ENCODE measurements at regions of chr18 and their contacts with region 1.

Region 1: DNA sequence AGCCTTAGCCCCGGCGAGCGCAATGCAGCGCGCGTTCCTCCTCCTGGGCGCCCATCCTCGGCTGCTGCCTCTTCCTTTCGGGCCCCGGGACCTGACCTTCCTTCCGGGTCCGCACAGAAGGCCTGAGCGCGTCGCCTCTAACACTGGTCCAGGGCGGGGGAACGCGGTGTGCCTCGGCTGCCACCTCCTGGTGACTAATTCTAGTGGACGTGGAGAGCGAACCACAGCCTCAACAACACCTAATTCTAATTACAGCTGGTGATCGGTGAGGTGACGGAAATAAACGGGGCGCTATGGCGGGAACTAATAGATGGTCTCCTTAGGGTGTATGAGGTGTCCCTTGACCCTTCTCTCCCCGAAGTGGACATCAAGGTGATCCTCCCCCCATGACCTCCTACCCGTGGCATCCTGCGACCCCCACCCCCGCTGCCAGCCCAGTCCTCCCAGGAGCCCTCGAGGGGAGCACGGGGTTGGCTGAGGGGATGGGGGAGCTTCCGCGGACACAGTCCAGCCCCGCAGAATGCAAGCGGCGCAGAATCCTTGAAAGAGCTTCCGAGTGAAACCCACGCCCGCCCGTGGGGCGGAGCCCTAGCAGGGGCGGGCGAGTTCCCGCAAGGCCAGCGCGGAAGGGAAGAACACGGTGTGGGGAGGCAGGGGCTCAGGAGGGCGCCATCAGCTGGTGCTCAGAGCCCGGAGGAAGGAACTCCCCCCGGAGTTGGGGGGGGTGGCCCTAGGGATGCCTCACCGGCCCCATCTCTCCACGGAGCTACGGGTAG is 12.8 kb upstream of the HMSD start:
- H3K4me3 ChIP-seq: peak overlapping the region; percentile 35
- H3K27ac ChIP-seq: no peak overlapping the region
- H3K4me1 ChIP-seq: no peaks in the 10 kb centered on the region
- CTCF ChIP-seq: peak; percentile 68; the same call in 1 of the 2 replicates

Region 2: GRCh38 chr18:63518178-63519012 is 417.9 kb before region 1 on chr18:
- CTCF ChIA-PET with region 1: interaction called, 14 read pairs
- POLR2A ChIA-PET with region 1: no interaction called
- H3K4me3 ChIP-seq: no peak overlapping the region
- H3K27ac ChIP-seq: no peak overlapping the region
- H3K4me1 ChIP-seq: peaks cover 3% of the 10 kb centered on the region; the same call in 1 of the 2 replicates
- CTCF ChIP-seq: peak; percentile 81

Region 3: DNA sequence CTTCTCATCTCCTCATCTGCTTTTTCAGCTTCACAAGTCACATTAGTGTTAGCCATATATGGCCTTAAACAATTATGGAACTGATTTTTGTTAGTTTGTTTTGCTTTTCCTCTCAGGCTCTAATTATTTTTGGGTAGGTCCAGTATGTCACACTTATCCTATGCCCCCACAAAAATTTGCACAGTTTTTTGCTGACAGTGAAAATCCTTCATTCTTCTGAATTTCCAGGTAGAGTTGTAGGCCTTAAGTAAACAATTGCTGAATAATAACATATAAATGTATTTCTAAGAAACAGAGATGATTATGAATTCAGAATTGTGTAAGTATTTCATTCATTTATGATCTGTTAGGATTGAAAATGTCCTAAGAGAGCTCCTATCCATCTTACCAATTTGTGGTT is 37.1 kb before region 1 on chr18:
- CTCF ChIA-PET with region 1: interaction called, 11 read pairs
- POLR2A ChIA-PET with region 1: no interaction called
- H3K4me3 ChIP-seq: no peak overlapping the region
- H3K27ac ChIP-seq: no peak overlapping the region
- H3K4me1 ChIP-seq: no peaks in the 10 kb centered on the region
- CTCF ChIP-seq: no peak

Region 4: DNA sequence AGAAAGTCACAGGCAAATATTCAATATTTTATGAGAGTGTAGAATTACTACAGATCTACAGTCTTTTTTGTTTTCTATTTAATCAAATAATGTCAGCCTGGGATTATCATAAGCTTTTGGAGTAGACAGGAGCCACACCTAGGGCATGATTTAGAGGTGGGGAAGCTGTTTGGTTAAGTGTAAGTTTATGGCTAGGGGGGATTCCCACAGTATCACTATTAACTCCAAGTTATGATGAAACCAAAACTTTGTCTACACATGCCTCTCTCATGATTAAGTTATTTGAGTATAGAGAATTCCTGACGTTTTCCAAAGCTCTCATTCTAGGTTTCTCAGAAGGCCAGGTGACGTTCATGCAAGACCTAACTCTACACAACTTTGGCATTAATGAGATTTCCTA is 26.5 kb before region 1 on chr18:
- CTCF ChIA-PET with region 1: interaction called, 11 read pairs
- POLR2A ChIA-PET with region 1: no interaction called
- H3K4me3 ChIP-seq: no peak overlapping the region
- H3K27ac ChIP-seq: no peak overlapping the region
- H3K4me1 ChIP-seq: no peaks in the 10 kb centered on the region
- CTCF ChIP-seq: no peak

Region 5: GRCh38 chr18:63949068-63949737 is 12.9 kb after region 1 on chr18 and contains the start of gene HMSD:
- CTCF ChIA-PET with region 1: interaction called, 20 read pairs
- POLR2A ChIA-PET with region 1: no interaction called
- H3K4me3 ChIP-seq: peak within 1 kb of the TSS; percentile 32
- H3K27ac ChIP-seq: peak within 1 kb of the TSS; percentile 58
- H3K4me1 ChIP-seq: no peaks in the 10 kb centered on the region
- CTCF ChIP-seq: 0 out of 2 replicates have a peak, but pooled peaks have one; percentile 31

Region 6: DNA sequence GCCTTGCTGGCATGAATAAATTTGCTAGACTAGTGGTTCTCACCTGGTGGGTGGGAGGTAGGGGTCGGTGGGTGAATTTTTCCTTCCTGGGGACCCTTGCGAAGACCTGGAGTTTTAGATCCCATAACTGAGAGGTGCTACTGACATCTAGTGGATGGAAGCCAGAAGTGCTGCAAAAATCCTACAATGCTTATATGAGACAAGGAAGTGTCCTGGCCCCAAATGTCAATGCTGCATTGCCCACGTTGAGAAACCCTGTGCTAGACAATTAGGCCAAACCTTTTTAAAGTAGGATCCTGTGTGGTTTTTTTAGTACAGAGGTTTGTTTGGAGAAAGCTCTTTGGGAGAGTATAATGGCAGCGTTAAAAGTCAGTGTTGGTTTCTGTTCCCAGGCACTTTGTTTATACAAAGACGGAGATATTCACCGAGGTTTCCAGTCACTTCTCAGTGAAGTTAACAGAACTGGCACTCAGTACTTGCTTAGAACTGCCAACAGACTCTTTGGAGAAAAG is 43.1 kb after region 1 on chr18:
- CTCF ChIA-PET with region 1: interaction called, 18 read pairs
- POLR2A ChIA-PET with region 1: no interaction called
- H3K4me3 ChIP-seq: no peak overlapping the region
- H3K27ac ChIP-seq: no peak overlapping the region
- H3K4me1 ChIP-seq: no peaks in the 10 kb centered on the region
- CTCF ChIP-seq: peak; percentile 52; the same call in 1 of the 2 replicates

Region 7: GRCh38 chr18:63994783-63995399 is 58.5 kb after region 1 on chr18:
- CTCF ChIA-PET with region 1: interaction called, 13 read pairs
- POLR2A ChIA-PET with region 1: no interaction called
- H3K4me3 ChIP-seq: no peak overlapping the region
- H3K27ac ChIP-seq: no peak overlapping the region
- H3K4me1 ChIP-seq: no peaks in the 10 kb centered on the region
- CTCF ChIP-seq: peak; percentile 48

Region 8: DNA sequence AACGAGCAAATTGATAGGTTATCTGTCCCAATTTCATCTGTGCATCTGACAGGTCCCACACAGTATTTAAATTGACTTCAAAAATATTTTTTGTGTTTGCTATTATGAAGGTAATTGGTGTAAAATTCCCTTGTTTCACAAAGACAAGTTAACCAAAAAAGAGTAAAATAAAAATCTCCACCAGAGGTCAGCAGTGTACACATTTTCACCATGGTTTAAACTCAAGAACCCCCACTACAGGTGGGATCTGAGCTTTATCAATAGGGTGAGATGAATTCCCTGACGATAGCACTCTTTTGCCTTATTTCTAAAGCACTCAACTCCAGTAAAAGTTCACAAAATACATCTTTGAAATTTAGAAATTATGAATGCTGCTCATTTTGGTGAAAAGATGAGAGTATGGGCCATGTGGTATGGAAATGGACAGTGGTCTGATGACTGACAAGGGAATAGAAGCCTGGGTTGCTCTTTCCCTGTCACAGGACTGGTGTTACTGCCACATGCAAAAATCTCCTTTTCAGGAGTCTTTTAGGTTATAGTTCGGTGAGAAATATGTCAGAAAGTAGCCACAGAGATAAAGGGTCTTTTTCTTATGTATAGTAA is 101.6 kb after region 1 on chr18:
- CTCF ChIA-PET with region 1: no interaction called
- POLR2A ChIA-PET with region 1: no interaction called
- H3K4me3 ChIP-seq: no peak overlapping the region
- H3K27ac ChIP-seq: no peak overlapping the region
- H3K4me1 ChIP-seq: no peaks in the 10 kb centered on the region
- CTCF ChIP-seq: 0 out of 2 replicates have a peak, but pooled peaks have one; percentile 24